ENCODE measurements at regions of chr20 and their contacts with region 1.

Region 1: DNA sequence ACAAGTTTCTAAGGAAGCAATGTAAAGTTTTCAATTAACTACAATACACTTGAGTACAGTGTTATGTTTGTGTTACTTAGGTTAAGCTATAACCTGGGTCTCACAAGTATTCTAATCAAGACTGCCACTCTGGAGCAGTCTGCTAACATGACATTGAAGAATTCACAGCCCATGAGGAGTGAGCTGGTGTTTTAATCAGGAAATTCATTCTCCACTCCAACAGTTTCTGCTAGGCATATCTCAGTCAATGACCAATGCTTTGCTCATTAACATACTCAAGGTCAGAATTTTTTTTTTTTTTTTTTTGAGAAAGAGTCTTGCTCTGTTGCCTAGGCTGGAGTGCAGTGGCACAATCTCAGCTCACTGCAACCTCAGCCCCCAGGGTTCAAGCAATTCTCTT is 59.6 kb upstream of the SAMHD1 start:
- DNase-seq: no peak
- H3K4me3 Mint-ChIP-seq: no peak overlapping the region
- H3K27ac Mint-ChIP-seq: peak overlapping the region; percentile 28
- H3K4me1 Mint-ChIP-seq: peaks cover 33% of the 10 kb centered on the region
- H3K27me3 Mint-ChIP-seq: no peaks in the 10 kb centered on the region

Region 2: DNA sequence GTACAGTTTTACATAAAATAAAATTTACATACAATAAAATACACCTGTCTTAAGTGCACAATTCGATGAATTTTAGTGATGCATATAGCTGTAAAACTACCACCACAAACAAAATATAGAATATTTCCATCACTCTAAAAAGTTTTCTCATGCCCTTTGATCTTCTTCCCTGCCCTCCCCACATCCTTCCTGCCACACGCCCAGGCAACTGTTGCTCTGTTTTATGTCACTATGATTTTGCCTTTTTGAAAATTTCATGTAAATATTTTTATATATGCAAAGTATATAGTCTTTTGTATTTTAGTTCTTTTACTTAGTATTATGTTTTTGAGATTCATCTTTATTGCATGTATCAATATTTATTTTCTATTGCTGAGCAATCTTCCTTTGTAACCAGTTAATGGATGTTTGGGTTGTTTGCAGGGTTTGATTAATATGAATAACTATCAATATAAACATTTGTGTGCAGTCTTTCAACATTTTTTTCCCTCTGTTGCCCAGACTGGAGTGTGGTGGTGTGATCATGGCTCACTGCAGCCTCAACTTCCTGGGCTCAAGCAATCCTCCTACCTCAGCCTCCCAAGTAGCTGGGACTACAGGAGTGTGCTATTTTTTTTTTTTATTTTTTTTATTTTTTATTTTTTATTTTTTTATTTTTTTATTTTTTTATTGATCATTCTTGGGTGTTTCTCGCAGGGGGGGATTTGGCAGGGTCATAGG is 35.9 kb before region 1 on chr20:
- CTCF ChIA-PET with region 1: no interaction called
- POLR2A ChIA-PET with region 1: interaction called, 5 read pairs
- intact Hi-C with region 1: loop called (anchors 2 kb)
- DNase-seq: peak; percentile 71
- H3K4me3 Mint-ChIP-seq: no peak overlapping the region
- H3K27ac Mint-ChIP-seq: peak overlapping the region; percentile 19
- H3K4me1 Mint-ChIP-seq: peaks cover 37% of the 10 kb centered on the region
- H3K27me3 Mint-ChIP-seq: no peaks in the 10 kb centered on the region

Region 3: GRCh38 chr20:37042986-37043972 is 32.1 kb after region 1 on chr20:
- CTCF ChIA-PET with region 1: interaction called, 3 read pairs
- POLR2A ChIA-PET with region 1: interaction called, 3 read pairs
- intact Hi-C with region 1: loop called (anchors 1 kb)
- DNase-seq: peak; percentile 40
- H3K4me3 Mint-ChIP-seq: peak overlapping the region; percentile 57
- H3K27ac Mint-ChIP-seq: peak overlapping the region; percentile 73
- H3K4me1 Mint-ChIP-seq: peaks cover 30% of the 10 kb centered on the region
- H3K27me3 Mint-ChIP-seq: no peaks in the 10 kb centered on the region

Region 4: DNA sequence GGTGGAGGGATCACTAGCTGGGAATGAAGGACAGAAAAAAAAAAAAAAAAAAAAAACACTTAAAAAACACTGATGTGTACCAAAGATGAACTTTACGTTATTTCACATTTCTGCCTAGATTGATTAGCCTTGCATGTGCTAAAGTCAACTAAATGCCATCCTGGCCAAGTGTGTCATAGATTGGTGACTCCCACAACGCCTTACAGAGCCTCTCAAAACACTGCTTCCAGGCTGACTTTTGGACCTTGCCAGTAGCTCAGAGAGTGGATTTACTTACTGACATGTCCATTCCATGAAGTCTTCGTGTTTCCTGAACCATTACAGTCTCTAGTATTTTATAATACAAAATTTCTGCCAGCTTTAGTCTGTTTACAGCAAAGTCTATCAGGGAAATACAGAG is 44.1 kb after region 1 on chr20:
- CTCF ChIA-PET with region 1: no interaction called
- POLR2A ChIA-PET with region 1: no interaction called
- intact Hi-C with region 1: no loop called
- DNase-seq: no peak
- H3K4me3 Mint-ChIP-seq: no peak overlapping the region
- H3K27ac Mint-ChIP-seq: no peak overlapping the region
- H3K4me1 Mint-ChIP-seq: no peaks in the 10 kb centered on the region
- H3K27me3 Mint-ChIP-seq: no peaks in the 10 kb centered on the region

Region 5: DNA sequence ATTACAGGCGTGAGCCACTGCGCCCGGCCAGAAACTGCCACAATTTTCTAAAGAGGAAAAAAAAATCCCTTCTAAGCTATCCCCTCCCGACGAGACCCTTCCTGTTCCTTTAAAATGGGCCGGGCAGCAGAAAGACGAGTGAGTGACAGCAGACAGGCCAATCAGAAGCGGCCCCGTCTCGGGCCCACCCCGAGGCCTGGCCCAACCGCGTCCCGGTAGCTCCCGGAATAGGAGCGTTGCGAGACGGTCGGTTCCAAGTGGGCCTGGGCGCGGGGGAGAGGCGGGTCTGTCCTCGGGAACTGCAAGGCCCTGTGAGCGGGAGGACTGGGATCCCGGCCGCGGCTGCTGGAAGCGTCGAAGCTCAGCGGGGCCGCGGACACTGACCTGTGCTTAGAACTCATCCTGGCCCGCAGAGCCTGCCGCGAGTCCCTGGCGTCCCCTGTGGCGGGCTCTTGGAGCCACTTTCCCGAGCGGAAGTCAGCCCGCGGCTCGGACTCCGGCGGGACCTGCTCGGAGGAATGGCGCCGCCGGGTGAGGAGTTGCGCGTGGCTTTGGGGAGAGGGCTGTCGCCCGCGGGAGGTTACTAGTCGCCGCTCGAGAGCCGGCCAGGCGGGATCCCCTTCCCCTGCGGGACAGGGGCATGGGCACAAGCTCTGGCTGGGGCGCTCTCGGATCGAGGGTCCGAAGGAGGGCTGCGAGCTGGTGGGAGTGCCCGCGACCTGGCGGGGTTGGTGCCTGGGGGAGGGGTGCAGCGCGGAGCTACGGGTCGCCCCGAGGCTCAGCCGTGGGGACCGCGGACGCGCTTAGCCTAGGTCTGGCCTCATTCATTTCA is 167.9 kb after region 1 on chr20 and contains the starts of genes MROH8 and RPN2:
- CTCF ChIA-PET with region 1: no interaction called
- POLR2A ChIA-PET with region 1: no interaction called
- intact Hi-C with region 1: loop called (anchors 10 kb)
- DNase-seq: peak; percentile 98
- H3K4me3 Mint-ChIP-seq: peak within 1 kb of the TSS; percentile 95
- H3K27ac Mint-ChIP-seq: peak within 1 kb of the TSS; percentile 96
- H3K4me1 Mint-ChIP-seq: peaks cover 33% of the 10 kb centered on the region
- H3K27me3 Mint-ChIP-seq: no peaks in the 10 kb centered on the region
- total RNA-seq, gene MROH8: 1.8 to 2.0 TPM
- total RNA-seq, gene RPN2: 123 to 125 TPM